Activated CD4-positive, alpha-beta T cell treated with anti-CD3 and anti-CD28 coated beads for 36 hours (primary cell): ENCODE measurements at regions of chr13 and their contacts with region 1.

Region 1: DNA sequence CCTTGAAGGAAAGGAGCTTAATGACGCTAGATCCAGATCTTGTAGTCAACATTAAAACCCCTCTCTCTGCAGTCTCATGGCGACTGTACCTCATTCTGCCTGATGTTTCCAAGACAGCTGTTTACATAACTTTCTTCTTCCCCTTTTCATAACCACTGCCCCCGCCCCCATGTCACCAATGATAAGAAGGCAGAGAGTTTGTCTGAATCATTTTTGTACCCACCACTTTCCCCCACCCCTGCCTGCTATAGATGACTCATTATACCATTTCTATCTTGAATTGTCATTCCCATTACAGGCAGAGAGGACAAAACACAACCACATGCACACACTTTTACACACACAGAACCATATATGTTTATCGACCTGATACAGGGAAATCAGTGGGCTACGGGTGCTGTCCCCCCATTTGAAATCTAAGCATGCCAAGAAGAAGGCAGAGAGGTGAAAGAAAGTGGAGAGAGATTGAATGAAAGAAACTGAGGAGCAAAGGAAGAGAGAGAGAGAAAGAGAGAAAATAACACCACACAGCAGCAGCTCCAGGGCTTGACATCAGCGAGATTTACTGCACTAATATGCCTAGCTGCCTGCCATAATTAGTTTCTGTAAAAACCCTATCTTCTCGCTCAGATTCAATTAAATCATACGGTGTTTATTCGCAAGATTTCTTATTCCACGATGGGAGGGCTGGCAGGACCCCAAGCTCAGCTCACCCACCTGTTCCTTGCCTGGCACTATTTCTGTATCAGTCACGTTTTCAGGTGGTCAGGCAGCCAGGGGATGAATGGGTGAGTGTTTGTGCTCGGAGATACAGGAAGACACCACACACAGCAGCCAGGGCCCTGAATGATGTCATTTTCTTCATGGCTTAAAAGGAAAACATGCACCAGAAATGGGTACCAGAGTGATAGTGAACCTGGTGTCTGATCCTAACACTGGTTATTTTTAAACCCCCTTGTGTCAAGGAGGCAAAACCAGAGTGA is 114.3 kb upstream of the SERP2 start:
- DNase-seq: peak; percentile 90
- ATAC-seq: peak; percentile 87
- H3K4me3 Mint-ChIP-seq: peak overlapping the region; percentile 62
- H3K27ac Mint-ChIP-seq: peak overlapping the region; percentile 94
- H3K4me1 Mint-ChIP-seq: peaks cover 21% of the 10 kb centered on the region
- H3K27me3 Mint-ChIP-seq: peaks cover 5% of the 10 kb centered on the region

Region 2: DNA sequence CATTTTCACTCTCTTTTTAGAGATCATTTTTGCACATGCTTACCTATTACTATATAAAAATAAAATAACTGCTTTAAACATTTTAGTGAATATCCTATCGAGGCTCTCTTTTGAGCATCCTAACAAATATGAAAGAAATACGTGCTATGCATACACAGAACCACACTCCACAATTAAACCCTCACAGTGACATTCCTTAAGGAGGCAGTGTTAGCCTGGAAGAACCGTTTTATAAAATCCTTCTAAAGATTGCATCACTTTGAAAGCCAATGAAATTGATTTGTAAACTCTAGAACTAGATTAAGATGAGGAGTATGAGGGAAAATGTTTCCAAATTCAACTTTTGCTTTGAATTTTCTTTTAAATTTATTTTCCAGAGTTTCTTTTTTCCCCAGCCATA is 461.5 kb before region 1 on chr13:
- CTCF ChIA-PET with region 1: no interaction called
- POLR2A ChIA-PET with region 1: no interaction called
- intact Hi-C with region 1: loop called in 1 of 2 experiments (anchors 2 kb)
- DNase-seq: no peak
- ATAC-seq: no peak
- H3K4me3 Mint-ChIP-seq: no peak overlapping the region
- H3K27ac Mint-ChIP-seq: no peak overlapping the region
- H3K4me1 Mint-ChIP-seq: peaks cover 34% of the 10 kb centered on the region
- H3K27me3 Mint-ChIP-seq: peaks cover 31% of the 10 kb centered on the region

Region 3: GRCh38 chr13:44141725-44142539 is 117.4 kb before region 1 on chr13:
- CTCF ChIA-PET with region 1: no interaction called
- POLR2A ChIA-PET with region 1: interaction called, 4 read pairs
- intact Hi-C with region 1: loop called in 1 of 2 experiments (anchors 5 kb)
- DNase-seq: peak; percentile 96
- ATAC-seq: peak; percentile 100
- H3K4me3 Mint-ChIP-seq: peak overlapping the region; percentile 87
- H3K27ac Mint-ChIP-seq: peak overlapping the region; percentile 90
- H3K4me1 Mint-ChIP-seq: peaks cover 15% of the 10 kb centered on the region
- H3K27me3 Mint-ChIP-seq: peaks cover 4% of the 10 kb centered on the region

Region 4: DNA sequence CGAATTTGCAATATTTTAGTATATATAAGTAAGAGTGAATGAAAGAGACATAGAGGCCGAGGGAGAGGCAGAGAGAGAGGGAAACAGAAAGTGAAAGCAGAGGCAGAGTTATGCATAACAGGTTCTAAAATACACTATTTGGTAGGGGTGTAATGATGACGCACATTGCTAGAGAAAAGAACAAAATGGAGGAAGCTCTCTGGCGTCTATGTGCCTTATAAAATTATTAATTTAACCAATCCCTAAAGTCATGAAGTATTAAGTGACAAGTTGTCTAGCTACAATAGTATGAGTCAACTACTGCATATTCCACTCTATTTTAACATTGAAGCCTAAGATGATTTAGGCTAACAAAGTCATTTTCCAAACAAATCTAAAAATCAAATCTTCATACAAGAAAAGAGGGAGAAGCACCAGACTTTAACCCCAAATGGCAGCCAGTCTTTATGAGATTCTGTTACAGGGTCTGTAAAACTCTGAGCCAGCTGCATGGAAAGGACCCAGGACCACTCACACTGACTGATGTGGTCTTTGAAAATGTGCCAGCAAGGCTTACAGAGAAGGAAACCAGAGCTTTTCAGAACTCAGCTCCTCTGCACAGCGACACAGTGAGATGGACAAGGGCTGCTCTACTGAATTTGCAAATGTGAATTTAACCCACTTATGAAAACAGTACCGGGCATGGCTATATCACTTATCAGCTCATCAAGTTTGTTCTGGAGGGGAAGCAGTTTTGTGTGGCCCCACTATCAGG is 15.3 kb after region 1 on chr13:
- CTCF ChIA-PET with region 1: interaction called, 4 read pairs
- POLR2A ChIA-PET with region 1: interaction called, 6 read pairs
- intact Hi-C with region 1: loop called (anchors 1 kb)
- DNase-seq: peak; percentile 21
- ATAC-seq: peak; percentile 97
- H3K4me3 Mint-ChIP-seq: peak overlapping the region; percentile 55
- H3K27ac Mint-ChIP-seq: peak overlapping the region; percentile 91
- H3K4me1 Mint-ChIP-seq: peaks cover 59% of the 10 kb centered on the region
- H3K27me3 Mint-ChIP-seq: no peaks in the 10 kb centered on the region

Region 5: GRCh38 chr13:44293908-44294735 is 34.8 kb after region 1 on chr13:
- CTCF ChIA-PET with region 1: no interaction called
- POLR2A ChIA-PET with region 1: no interaction called
- intact Hi-C with region 1: loop called in 1 of 2 experiments (anchors 1 kb)
- DNase-seq: no peak
- ATAC-seq: peak; percentile 94
- H3K4me3 Mint-ChIP-seq: no peak overlapping the region
- H3K27ac Mint-ChIP-seq: peak overlapping the region; percentile 49
- H3K4me1 Mint-ChIP-seq: peaks cover 27% of the 10 kb centered on the region
- H3K27me3 Mint-ChIP-seq: peaks cover 21% of the 10 kb centered on the region

Region 6: DNA sequence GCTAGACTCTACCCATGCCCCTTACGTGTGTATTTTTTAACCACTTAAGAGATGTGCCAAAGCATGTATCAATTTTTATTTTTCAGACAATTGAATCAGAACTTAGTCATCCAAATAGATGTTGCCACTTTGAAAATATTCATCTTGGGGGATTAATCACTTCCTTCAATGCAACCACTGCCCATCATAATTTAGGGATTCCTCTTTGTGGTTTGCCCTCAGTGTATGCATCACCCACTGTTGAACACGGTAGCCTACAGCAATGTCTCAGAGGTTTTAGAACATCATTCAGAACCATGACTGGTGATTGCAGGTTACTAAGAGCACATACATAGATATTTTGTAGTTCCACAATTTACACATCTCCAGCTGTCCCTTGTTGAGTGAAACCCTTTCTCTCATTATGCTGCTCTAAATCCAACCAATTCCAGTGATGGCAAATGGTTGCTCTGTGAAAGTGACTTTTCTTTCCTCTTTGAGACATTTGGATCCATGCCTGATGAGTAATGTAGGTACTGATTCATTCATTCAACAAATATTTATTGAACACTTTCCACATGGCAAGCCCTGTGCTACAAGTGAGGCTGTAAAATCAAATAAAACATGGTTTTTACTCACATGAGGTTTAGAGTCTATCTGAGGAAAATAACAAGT is 53.7 kb after region 1 on chr13:
- CTCF ChIA-PET with region 1: no interaction called
- POLR2A ChIA-PET with region 1: no interaction called
- intact Hi-C with region 1: loop called (anchors 1 kb)
- DNase-seq: peak; percentile 47
- ATAC-seq: peak; percentile 95
- H3K4me3 Mint-ChIP-seq: no peak overlapping the region
- H3K27ac Mint-ChIP-seq: peak overlapping the region; percentile 81
- H3K4me1 Mint-ChIP-seq: peaks cover 18% of the 10 kb centered on the region
- H3K27me3 Mint-ChIP-seq: peaks cover 28% of the 10 kb centered on the region